CD8-positive, alpha-beta T cell (primary cell): ENCODE measurements at regions of chr4 and their contacts with region 1.

Region 1: GRCh38 chr4:185209031-185209851 is at the start of gene SNX25:
- DNase-seq: peak; percentile 68 to 92 (median 89)
- ATAC-seq: peak; percentile 92
- H3K4me3 ChIP-seq: peak within 1 kb of the TSS; percentile 60 to 71
- H3K4me3 Mint-ChIP-seq: peak within 1 kb of the TSS; percentile 92
- H3K27ac ChIP-seq: peak within 1 kb of the TSS; percentile 34 to 48
- H3K27ac Mint-ChIP-seq: peak within 1 kb of the TSS; percentile 84
- H3K4me1 ChIP-seq: peaks cover 33% of the 10 kb centered on the region
- H3K4me1 Mint-ChIP-seq: peaks cover 50% of the 10 kb centered on the region
- H3K27me3 ChIP-seq: no peaks in the 10 kb centered on the region
- H3K27me3 Mint-ChIP-seq: no peaks in the 10 kb centered on the region
- CTCF ChIP-seq: no peak
- total RNA-seq, gene SNX25: 18.0 to 18.2 TPM

Region 2: GRCh38 chr4:184544788-184545409 is 664.3 kb before region 1 on chr4:
- CTCF ChIA-PET with region 1: no interaction called
- POLR2A ChIA-PET with region 1: no interaction called
- intact Hi-C with region 1: loop called in 1 of 2 experiments (anchors 5 kb)
- DNase-seq: no peak
- ATAC-seq: no peak
- H3K4me3 ChIP-seq: no peak overlapping the region
- H3K4me3 Mint-ChIP-seq: no peak overlapping the region
- H3K27ac ChIP-seq: no peak overlapping the region
- H3K27ac Mint-ChIP-seq: no peak overlapping the region
- H3K4me1 ChIP-seq: no peaks in the 10 kb centered on the region
- H3K4me1 Mint-ChIP-seq: peaks cover 13% of the 10 kb centered on the region
- H3K27me3 ChIP-seq: peaks cover 0 to 2% of the 10 kb centered on the region in 2 experiments
- H3K27me3 Mint-ChIP-seq: no peaks in the 10 kb centered on the region
- CTCF ChIP-seq: no peak

Region 3: DNA sequence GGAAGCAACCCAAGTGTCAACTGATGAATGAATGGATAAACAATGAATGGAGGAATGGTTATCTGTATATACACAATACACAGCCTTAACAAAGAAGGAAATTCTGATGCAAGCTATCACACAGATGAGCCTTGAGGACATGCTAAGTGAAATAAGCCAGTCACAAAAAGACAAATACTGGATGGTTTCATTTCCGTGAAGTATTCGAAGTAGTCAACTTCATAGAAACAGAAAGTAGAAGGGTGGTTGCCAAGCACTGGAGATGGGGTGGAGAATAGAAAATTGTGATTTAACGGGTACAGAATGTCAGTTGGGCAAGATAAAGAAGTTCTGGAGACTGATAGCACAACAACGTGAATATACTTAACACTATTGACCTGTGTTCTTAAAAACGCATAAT is 503.5 kb before region 1 on chr4:
- CTCF ChIA-PET with region 1: no interaction called
- POLR2A ChIA-PET with region 1: no interaction called
- intact Hi-C with region 1: no loop called
- DNase-seq: no peak
- ATAC-seq: no peak
- H3K4me3 ChIP-seq: no peak overlapping the region
- H3K4me3 Mint-ChIP-seq: no peak overlapping the region
- H3K27ac ChIP-seq: no peak overlapping the region
- H3K27ac Mint-ChIP-seq: no peak overlapping the region
- H3K4me1 ChIP-seq: no peaks in the 10 kb centered on the region
- H3K4me1 Mint-ChIP-seq: peaks cover 2% of the 10 kb centered on the region
- H3K27me3 ChIP-seq: no peaks in the 10 kb centered on the region
- H3K27me3 Mint-ChIP-seq: no peaks in the 10 kb centered on the region
- CTCF ChIP-seq: no peak

Region 4: GRCh38 chr4:184733654-184734524 is 475.4 kb before region 1 on chr4 and contains the start of gene CENPU:
- CTCF ChIA-PET with region 1: no interaction called
- POLR2A ChIA-PET with region 1: no interaction called
- intact Hi-C with region 1: loop called (anchors 5 to 10 kb)
- DNase-seq: peak; percentile 87 to 97 (median 94)
- ATAC-seq: peak; percentile 95
- H3K4me3 ChIP-seq: peak within 1 kb of the TSS; percentile 74 to 79
- H3K4me3 Mint-ChIP-seq: peak within 1 kb of the TSS; percentile 87
- H3K27ac ChIP-seq: peak within 1 kb of the TSS; percentile 2 to 43
- H3K27ac Mint-ChIP-seq: peak within 1 kb of the TSS; percentile 84
- H3K4me1 ChIP-seq: peaks cover 8% of the 10 kb centered on the region
- H3K4me1 Mint-ChIP-seq: peaks cover 18% of the 10 kb centered on the region
- H3K27me3 ChIP-seq: no peaks in the 10 kb centered on the region
- H3K27me3 Mint-ChIP-seq: no peaks in the 10 kb centered on the region
- CTCF ChIP-seq: no peak
- total RNA-seq, gene CENPU: 3.4 TPM

Region 5: GRCh38 chr4:185254434-185254833 is 45.2 kb after region 1 on chr4:
- CTCF ChIA-PET with region 1: no interaction called
- POLR2A ChIA-PET with region 1: interaction called, 8 read pairs
- intact Hi-C with region 1: loop called (anchors 1 to 2 kb)
- DNase-seq: peak in 2 of 9 experiments; percentile 61 to 62
- ATAC-seq: peak; percentile 75
- H3K4me3 ChIP-seq: no peak overlapping the region
- H3K4me3 Mint-ChIP-seq: peak overlapping the region; percentile 42
- H3K27ac ChIP-seq: no peak overlapping the region
- H3K27ac Mint-ChIP-seq: peak overlapping the region; percentile 92
- H3K4me1 ChIP-seq: peaks cover 15% of the 10 kb centered on the region
- H3K4me1 Mint-ChIP-seq: peaks cover 63% of the 10 kb centered on the region
- H3K27me3 ChIP-seq: no peaks in the 10 kb centered on the region
- H3K27me3 Mint-ChIP-seq: no peaks in the 10 kb centered on the region
- CTCF ChIP-seq: no peak

Region 6: DNA sequence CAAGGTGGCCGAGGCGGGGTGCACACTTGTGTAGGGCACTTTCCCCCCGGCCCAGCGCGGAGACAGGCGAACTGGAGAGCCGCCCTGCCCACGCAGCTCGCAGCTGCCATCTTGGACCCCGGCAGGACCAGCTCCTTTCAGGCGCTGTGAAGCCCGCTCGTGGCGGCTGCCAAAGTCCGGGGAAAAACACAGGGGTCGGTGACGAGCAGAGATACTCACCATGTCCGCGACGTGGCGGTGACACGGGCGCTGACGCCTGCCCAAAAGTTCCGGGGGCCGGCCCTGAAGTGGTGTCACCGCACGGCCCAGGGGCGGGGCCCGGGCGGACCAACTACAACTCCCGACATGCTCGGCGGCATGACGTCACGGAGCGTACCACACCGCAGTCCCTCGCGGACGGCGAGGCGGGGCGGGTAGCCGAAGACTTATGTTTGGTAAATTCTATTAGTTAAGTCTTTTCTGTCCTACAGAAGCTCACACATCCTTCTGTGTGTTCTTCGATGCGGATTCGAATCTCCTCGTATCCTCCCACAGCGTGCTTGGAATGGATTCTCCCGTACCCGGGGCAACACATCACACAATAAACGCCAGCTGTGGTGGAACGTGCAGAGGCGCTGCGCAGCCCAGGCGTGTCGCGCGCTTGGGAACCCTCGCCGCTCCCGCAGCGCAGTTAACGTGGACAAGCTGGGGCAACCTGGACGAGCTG is 216.6 kb after region 1 on chr4 and contains the start of gene UFSP2:
- CTCF ChIA-PET with region 1: no interaction called
- POLR2A ChIA-PET with region 1: no interaction called
- intact Hi-C with region 1: loop called (anchors 1 to 10 kb)
- DNase-seq: peak; percentile 75 to 97 (median 89)
- ATAC-seq: peak; percentile 86
- H3K4me3 ChIP-seq: peak within 1 kb of the TSS; percentile 87 to 90
- H3K4me3 Mint-ChIP-seq: peak within 1 kb of the TSS; percentile 83
- H3K27ac ChIP-seq: peak within 1 kb of the TSS; percentile 97 to 99
- H3K27ac Mint-ChIP-seq: peak within 1 kb of the TSS; percentile 100
- H3K4me1 ChIP-seq: peaks cover 18% of the 10 kb centered on the region
- H3K4me1 Mint-ChIP-seq: peaks cover 36% of the 10 kb centered on the region
- H3K27me3 ChIP-seq: no peaks in the 10 kb centered on the region
- H3K27me3 Mint-ChIP-seq: peaks cover 5% of the 10 kb centered on the region
- CTCF ChIP-seq: no peak
- total RNA-seq, gene UFSP2: 13.4 to 17.4 TPM

Region 7: GRCh38 chr4:185471235-185472102 is 262.2 kb after region 1 on chr4 and contains the start of gene CCDC110:
- CTCF ChIA-PET with region 1: no interaction called
- POLR2A ChIA-PET with region 1: no interaction called
- intact Hi-C with region 1: loop called (anchors 1 to 5 kb)
- DNase-seq: peak; percentile 79 to 96 (median 88)
- ATAC-seq: peak; percentile 95
- H3K4me3 ChIP-seq: peak within 1 kb of the TSS; percentile 60 to 85
- H3K4me3 Mint-ChIP-seq: peak within 1 kb of the TSS; percentile 93
- H3K27ac ChIP-seq: peak within 1 kb of the TSS; percentile 27 to 34
- H3K27ac Mint-ChIP-seq: peak within 1 kb of the TSS; percentile 67
- H3K4me1 ChIP-seq: peaks cover 13% of the 10 kb centered on the region
- H3K4me1 Mint-ChIP-seq: peaks cover 16% of the 10 kb centered on the region
- H3K27me3 ChIP-seq: no peaks in the 10 kb centered on the region
- H3K27me3 Mint-ChIP-seq: peaks cover 2% of the 10 kb centered on the region
- CTCF ChIP-seq: peak; percentile 64
- total RNA-seq, gene CCDC110: 0.57 TPM in 1 of 2 experiments, not detected in the other